CD8-positive, alpha-beta T cell (primary cell): ENCODE measurements at regions of chr6 and their contacts with region 1.

Region 1: GRCh38 chr6:158793432-158793831 is 25.7 kb downstream of the EZR start:
- DNase-seq: peak in 2 of 9 experiments; percentile 59 to 70
- ATAC-seq: peak; percentile 22
- H3K4me3 ChIP-seq: no peak overlapping the region
- H3K4me3 Mint-ChIP-seq: peak overlapping the region; percentile 32
- H3K27ac ChIP-seq: peak overlapping the region in 1 of 2 experiments; percentile 32
- H3K27ac Mint-ChIP-seq: peak overlapping the region; percentile 45
- H3K4me1 ChIP-seq: peaks cover 73% of the 10 kb centered on the region
- H3K4me1 Mint-ChIP-seq: peaks cover 81% of the 10 kb centered on the region
- H3K27me3 ChIP-seq: no peaks in the 10 kb centered on the region
- H3K27me3 Mint-ChIP-seq: no peaks in the 10 kb centered on the region
- CTCF ChIP-seq: peak; percentile 36

Region 2: DNA sequence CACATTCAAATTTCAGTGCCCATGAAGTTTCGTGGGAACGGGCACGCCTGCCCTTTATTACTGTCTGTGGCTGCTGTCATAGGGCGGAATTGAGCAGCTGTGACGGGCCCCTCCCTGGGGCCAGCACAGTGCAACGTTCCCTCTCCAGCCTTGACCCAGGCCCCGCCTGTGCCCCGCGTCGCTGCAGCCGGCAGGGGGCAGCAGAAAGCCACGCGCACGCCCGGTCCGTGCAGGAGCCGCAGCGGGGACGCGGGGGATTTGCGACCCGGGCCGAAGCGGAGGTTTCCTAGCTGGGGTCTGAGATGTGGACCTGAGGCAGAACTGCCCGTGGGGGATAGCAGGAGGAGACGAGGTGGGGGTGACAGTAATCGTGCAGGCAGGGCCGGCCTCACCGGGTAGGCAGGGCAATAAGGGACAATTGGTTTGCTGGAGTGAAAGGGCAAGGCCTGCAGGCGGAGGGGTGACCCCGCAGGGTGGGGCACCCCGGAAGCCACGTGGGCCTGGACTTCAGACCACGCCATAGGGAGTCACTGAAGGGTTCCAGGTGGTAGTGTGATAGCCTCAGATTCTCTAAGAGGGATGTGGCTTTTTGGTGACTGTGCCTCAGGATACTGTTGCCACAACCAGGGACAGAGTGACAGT is 89.1 kb before region 1 on chr6:
- CTCF ChIA-PET with region 1: interaction called, 8 read pairs
- POLR2A ChIA-PET with region 1: no interaction called
- intact Hi-C with region 1: loop called (anchors 2 to 5 kb)
- DNase-seq: peak; percentile 66 to 89 (median 77)
- ATAC-seq: peak; percentile 97
- H3K4me3 ChIP-seq: peak overlapping the region; percentile 45 to 60
- H3K4me3 Mint-ChIP-seq: peak overlapping the region; percentile 81
- H3K27ac ChIP-seq: peak overlapping the region in 1 of 2 experiments; percentile 17
- H3K27ac Mint-ChIP-seq: peak overlapping the region; percentile 79
- H3K4me1 ChIP-seq: peaks cover 8% of the 10 kb centered on the region
- H3K4me1 Mint-ChIP-seq: peaks cover 9% of the 10 kb centered on the region
- H3K27me3 ChIP-seq: no peaks in the 10 kb centered on the region
- H3K27me3 Mint-ChIP-seq: no peaks in the 10 kb centered on the region
- CTCF ChIP-seq: peak; percentile 98

Region 3: GRCh38 chr6:158758451-158758861 is 35.0 kb before region 1 on chr6:
- CTCF ChIA-PET with region 1: no interaction called
- POLR2A ChIA-PET with region 1: interaction called, 10 read pairs
- intact Hi-C with region 1: no loop called
- DNase-seq: no peak
- ATAC-seq: no peak
- H3K4me3 ChIP-seq: no peak overlapping the region
- H3K4me3 Mint-ChIP-seq: no peak overlapping the region
- H3K27ac ChIP-seq: no peak overlapping the region
- H3K27ac Mint-ChIP-seq: no peak overlapping the region
- H3K4me1 ChIP-seq: no peaks in the 10 kb centered on the region
- H3K4me1 Mint-ChIP-seq: no peaks in the 10 kb centered on the region
- H3K27me3 ChIP-seq: no peaks in the 10 kb centered on the region
- H3K27me3 Mint-ChIP-seq: no peaks in the 10 kb centered on the region
- CTCF ChIP-seq: no peak

Region 4: GRCh38 chr6:158808941-158809678 is 15.7 kb after region 1 on chr6:
- CTCF ChIA-PET with region 1: interaction called, 14 read pairs
- POLR2A ChIA-PET with region 1: interaction called, 11 read pairs
- intact Hi-C with region 1: loop called in 1 of 2 experiments (anchors 1 kb)
- DNase-seq: peak in 5 of 9 experiments; percentile 44 to 76 (median 68)
- ATAC-seq: peak; percentile 71
- H3K4me3 ChIP-seq: no peak overlapping the region
- H3K4me3 Mint-ChIP-seq: peak overlapping the region; percentile 61
- H3K27ac ChIP-seq: peak overlapping the region in 1 of 2 experiments; percentile 46
- H3K27ac Mint-ChIP-seq: peak overlapping the region; percentile 91
- H3K4me1 ChIP-seq: peaks cover 92% of the 10 kb centered on the region
- H3K4me1 Mint-ChIP-seq: peaks cover 96% of the 10 kb centered on the region
- H3K27me3 ChIP-seq: no peaks in the 10 kb centered on the region
- H3K27me3 Mint-ChIP-seq: no peaks in the 10 kb centered on the region
- CTCF ChIP-seq: no peak

Region 5: DNA sequence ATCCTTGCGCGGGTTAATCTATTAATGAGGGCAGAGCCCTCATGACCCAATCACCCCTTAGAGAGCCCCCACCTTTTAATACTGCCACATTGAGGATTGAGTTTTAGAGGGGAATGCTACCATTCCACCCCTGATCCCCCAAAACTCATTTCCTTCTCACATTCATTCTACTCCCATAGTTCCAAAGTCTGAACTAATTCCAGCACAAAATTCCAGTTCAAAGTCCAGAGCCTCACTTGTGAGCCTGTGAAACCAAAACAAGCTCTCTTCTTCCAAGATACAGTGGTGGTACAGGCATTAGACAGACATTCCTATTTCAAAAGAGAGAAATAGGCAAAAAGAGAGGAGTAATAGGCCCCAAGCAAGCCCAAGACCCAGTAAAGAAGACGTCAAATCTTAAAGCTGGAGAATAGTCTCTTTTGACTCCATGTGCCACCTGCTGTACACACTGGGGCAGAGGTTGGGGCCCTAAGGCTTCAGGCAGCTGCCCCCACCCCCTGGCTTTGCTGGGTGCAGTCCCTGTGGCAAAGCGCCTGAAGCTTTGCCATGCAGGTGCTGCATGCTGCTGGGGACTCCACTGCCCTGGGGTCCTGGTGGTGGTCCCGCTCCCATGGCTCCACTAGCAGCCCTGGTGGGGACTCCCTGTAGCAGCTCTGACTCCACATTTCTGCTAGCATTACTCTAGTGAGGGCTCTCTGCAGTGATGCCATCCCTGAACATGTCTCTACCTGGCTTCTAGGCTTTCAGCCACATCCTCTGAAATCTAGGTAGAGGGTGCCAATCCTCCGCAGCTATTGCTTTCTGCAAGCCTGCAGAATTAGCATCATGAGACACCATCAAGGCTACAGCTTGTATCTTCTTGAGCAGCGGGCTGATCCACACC is 165.3 kb after region 1 on chr6:
- CTCF ChIA-PET with region 1: interaction called, 20 read pairs
- POLR2A ChIA-PET with region 1: interaction called, 3 read pairs
- intact Hi-C with region 1: no loop called
- DNase-seq: peak in 5 of 9 experiments; percentile 21 to 47 (median 35)
- ATAC-seq: peak; percentile 65
- H3K4me3 ChIP-seq: no peak overlapping the region
- H3K4me3 Mint-ChIP-seq: no peak overlapping the region
- H3K27ac ChIP-seq: no peak overlapping the region
- H3K27ac Mint-ChIP-seq: no peak overlapping the region
- H3K4me1 ChIP-seq: no peaks in the 10 kb centered on the region
- H3K4me1 Mint-ChIP-seq: no peaks in the 10 kb centered on the region
- H3K27me3 ChIP-seq: no peaks in the 10 kb centered on the region
- H3K27me3 Mint-ChIP-seq: no peaks in the 10 kb centered on the region
- CTCF ChIP-seq: peak; percentile 21